ENCODE measurements at regions of chr5 and their contacts with region 1.

Region 1: GRCh38 chr5:61182449-61182848 is 20.2 kb upstream of the SMIM15 start:
- DNase-seq: peak in 6 of 9 donors; percentile 17 to 45 (median 32)
- ATAC-seq: peak; percentile 54
- H3K4me3 ChIP-seq: no peak overlapping the region
- H3K4me3 Mint-ChIP-seq: no peak overlapping the region
- H3K27ac ChIP-seq: no peak overlapping the region
- H3K27ac Mint-ChIP-seq: peak overlapping the region in 1 of 9 donors; percentile 56
- H3K4me1 ChIP-seq: no peaks in the 10 kb centered on the region
- H3K4me1 Mint-ChIP-seq: peaks cover 2 to 22% (median 6%) of the 10 kb centered on the region in 7 donors
- H3K27me3 ChIP-seq: no peaks in the 10 kb centered on the region
- H3K27me3 Mint-ChIP-seq: peaks cover 8 to 18% (median 17%) of the 10 kb centered on the region in 5 donors

Region 2: DNA sequence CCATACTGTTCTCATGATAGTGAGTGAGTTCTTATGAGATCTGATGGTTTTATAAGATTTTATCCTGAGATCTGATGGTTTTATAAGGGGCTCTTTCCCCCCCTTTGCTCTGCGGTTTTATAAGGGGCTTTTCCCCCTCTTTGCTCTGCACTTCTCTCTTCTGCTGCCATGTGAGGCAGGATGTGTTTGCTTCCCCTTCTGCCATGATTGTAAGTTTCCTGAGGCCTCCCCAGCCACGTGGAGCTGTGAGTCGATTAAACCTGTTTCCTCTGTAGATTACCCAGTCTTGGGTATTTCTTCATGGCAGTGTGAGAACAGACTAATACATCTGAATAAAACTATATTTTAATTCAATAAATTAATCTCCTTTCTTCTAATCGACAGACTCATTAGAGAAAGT is 84.7 kb after region 1 on chr5:
- CTCF ChIA-PET with region 1: no interaction called
- POLR2A ChIA-PET with region 1: no interaction called
- intact Hi-C with region 1: loop called in 1 of 2 experiments (anchors 5 kb)
- DNase-seq: no peak
- ATAC-seq: no peak
- H3K4me3 ChIP-seq: no peak overlapping the region
- H3K4me3 Mint-ChIP-seq: no peak overlapping the region
- H3K27ac ChIP-seq: no peak overlapping the region
- H3K27ac Mint-ChIP-seq: no peak overlapping the region
- H3K4me1 ChIP-seq: no peaks in the 10 kb centered on the region
- H3K4me1 Mint-ChIP-seq: peaks cover 8 to 22% (median 14%) of the 10 kb centered on the region in 7 donors
- H3K27me3 ChIP-seq: no peaks in the 10 kb centered on the region
- H3K27me3 Mint-ChIP-seq: peaks cover 0 to 9% (median 0%) of the 10 kb centered on the region in 5 donors

Measured in naive thymus-derived CD4-positive, alpha-beta T cell (primary cell).